Activated CD4-positive, alpha-beta T cell treated with anti-CD3 and anti-CD28 coated beads for 36 hours (primary cell): ENCODE measurements at regions of chr1 and their contacts with region 1.

Region 1: DNA sequence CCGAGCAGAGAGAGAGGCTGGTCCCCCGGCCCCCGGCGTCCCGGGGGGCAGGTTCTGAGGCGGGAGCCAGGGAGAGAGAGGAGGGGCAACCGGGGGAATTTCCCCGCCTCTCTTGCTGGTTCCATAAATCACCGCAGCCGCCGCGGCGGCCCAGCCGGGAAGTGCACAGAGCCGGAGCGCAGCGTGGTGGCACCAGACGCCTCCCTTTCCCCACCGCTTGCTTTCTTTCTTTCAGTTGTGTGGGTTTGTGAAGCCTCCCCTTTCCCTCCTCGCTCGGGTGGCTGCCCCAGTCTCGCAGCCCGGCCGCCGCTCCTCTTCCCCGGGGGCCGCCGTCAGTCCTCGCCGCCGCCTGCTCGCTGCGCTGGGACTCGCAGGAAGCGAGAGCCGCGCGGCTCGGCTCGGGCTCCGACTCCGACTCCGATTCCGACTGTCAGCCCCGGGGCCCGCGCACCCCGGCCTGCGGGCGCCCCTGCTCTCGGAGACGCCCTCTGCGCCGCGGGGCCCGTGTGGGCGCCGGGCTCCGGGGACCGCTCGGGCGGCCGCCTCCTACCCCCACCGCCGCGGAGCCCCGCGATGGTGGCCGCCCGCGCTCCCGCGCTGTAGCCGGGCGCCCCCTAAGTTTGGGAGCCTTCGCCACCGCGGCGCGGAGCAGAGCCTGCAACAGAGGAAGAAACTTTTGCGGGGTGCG is at the start of gene CACHD1:
- DNase-seq: peak; percentile 89
- ATAC-seq: peak; percentile 88
- H3K4me3 Mint-ChIP-seq: peak within 1 kb of the TSS; percentile 82
- H3K27ac Mint-ChIP-seq: peak within 1 kb of the TSS; percentile 77
- H3K4me1 Mint-ChIP-seq: peaks cover 16% of the 10 kb centered on the region
- H3K27me3 Mint-ChIP-seq: peaks cover 32% of the 10 kb centered on the region
- total RNA-seq, gene CACHD1: 1.9 to 2.3 TPM

Region 2: DNA sequence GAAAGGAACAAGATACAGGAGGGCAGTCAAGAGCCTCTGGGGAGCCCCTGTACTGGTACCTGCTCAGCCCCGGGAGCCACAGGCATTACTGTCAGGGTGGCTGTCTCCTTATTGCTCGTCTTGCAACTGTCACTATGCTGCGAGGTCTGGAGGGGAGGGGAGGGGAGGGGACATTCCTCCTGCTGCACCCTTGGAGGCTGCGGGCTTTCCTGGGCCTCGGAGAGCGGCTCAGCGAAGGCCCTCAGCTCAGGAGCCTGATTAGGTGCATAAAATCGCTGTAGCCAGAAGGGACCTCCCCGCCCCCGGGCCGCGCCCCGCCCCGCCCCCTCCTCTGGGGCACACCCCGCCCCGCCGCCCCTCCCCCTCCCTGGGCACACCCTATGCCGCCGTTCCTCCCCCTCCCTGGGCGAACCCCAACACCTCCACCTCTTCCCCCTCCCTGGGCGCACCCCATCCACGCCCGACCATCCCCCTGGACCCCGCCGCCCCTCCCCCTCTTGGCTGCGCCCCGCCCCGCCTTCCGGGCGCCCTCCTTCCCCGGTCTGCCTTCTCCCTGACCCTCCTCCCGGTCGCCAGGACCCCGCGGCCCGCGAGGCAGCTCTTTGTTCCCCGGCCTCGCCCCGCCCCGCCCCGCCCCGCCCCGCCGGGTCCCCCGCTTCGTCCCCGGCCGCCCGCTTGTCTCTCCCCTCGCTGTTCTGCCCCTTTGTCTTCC is 35.3 kb after region 1 on chr1:
- CTCF ChIA-PET with region 1: no interaction called
- POLR2A ChIA-PET with region 1: no interaction called
- intact Hi-C with region 1: loop called in 1 of 2 experiments (anchors 1 kb)
- DNase-seq: peak; percentile 83
- ATAC-seq: peak; percentile 68
- H3K4me3 Mint-ChIP-seq: peak overlapping the region; percentile 66
- H3K27ac Mint-ChIP-seq: peak overlapping the region; percentile 52
- H3K4me1 Mint-ChIP-seq: peaks cover 29% of the 10 kb centered on the region
- H3K27me3 Mint-ChIP-seq: peaks cover 13% of the 10 kb centered on the region

Region 3: DNA sequence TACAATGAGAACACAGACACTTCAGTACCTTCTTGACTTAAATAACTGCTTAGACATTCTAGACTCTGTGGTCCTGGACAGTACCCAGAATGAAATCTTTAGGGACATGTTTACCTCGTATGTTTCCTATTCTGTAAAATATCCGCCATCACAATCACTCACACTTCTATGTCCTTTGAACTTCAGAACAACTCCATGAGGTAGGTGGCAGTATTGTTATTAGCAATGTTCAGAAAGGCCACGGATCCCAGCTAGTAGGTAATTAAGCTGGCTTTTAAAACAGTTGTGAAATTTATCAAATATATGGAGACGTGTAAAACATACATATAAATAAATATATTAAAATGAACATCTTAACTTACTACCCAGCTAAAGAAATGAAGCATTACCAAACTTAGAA is 83.2 kb after region 1 on chr1:
- CTCF ChIA-PET with region 1: no interaction called
- POLR2A ChIA-PET with region 1: no interaction called
- intact Hi-C with region 1: loop called in 1 of 2 experiments (anchors 2 kb)
- DNase-seq: no peak
- ATAC-seq: peak; percentile 32
- H3K4me3 Mint-ChIP-seq: no peak overlapping the region
- H3K27ac Mint-ChIP-seq: no peak overlapping the region
- H3K4me1 Mint-ChIP-seq: peaks cover 39% of the 10 kb centered on the region
- H3K27me3 Mint-ChIP-seq: no peaks in the 10 kb centered on the region

Region 4: GRCh38 chr1:64663668-64664067 is 193.5 kb after region 1 on chr1:
- CTCF ChIA-PET with region 1: no interaction called
- POLR2A ChIA-PET with region 1: no interaction called
- intact Hi-C with region 1: no loop called
- DNase-seq: peak; percentile 56
- ATAC-seq: peak; percentile 61
- H3K4me3 Mint-ChIP-seq: no peak overlapping the region
- H3K27ac Mint-ChIP-seq: no peak overlapping the region
- H3K4me1 Mint-ChIP-seq: no peaks in the 10 kb centered on the region
- H3K27me3 Mint-ChIP-seq: peaks cover 2% of the 10 kb centered on the region

Region 5: GRCh38 chr1:64675718-64676345 is 205.7 kb after region 1 on chr1:
- CTCF ChIA-PET with region 1: no interaction called
- POLR2A ChIA-PET with region 1: no interaction called
- intact Hi-C with region 1: loop called in 1 of 2 experiments (anchors 5 kb)
- DNase-seq: no peak
- ATAC-seq: no peak
- H3K4me3 Mint-ChIP-seq: no peak overlapping the region
- H3K27ac Mint-ChIP-seq: no peak overlapping the region
- H3K4me1 Mint-ChIP-seq: no peaks in the 10 kb centered on the region
- H3K27me3 Mint-ChIP-seq: no peaks in the 10 kb centered on the region

Region 6: DNA sequence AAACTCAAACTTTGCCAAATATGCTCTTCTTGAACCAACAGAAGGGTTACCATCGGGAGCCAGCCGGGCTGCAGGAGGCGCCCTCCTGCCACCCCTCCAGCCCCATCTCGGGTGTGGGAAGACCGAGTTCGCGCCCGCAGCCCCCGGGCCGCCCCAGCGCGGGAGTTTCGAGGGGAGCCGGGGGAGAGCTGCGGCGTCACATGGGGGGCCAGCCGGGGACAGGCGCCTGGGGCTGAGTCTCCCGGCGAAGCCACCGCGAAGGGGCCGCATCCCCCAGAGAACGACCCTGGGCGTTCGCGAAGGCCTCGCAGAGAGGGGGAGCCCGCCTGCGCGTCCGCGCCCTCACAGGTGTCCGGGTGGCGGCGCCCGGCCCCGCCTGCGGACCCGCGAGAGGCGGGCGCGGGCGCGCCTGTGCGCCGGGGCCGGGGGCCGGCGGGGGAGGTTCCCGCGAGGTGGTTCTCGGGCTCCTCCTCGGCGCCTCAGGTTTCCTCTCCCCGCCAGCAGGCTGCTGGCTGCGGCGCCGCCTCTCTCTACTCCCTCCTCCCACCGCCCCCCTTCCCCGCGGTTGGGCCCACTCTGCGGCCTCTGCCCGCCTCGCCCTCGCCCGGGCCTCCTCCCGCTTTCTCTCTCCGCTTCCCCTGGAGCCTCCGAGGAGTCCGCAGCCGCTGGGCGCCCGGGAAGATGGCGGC is 274.5 kb after region 1 on chr1 and contains the start of gene RAVER2:
- CTCF ChIA-PET with region 1: no interaction called
- POLR2A ChIA-PET with region 1: no interaction called
- intact Hi-C with region 1: loop called in 1 of 2 experiments (anchors 1 kb)
- DNase-seq: peak; percentile 72
- ATAC-seq: peak; percentile 79
- H3K4me3 Mint-ChIP-seq: peak within 1 kb of the TSS; percentile 76
- H3K27ac Mint-ChIP-seq: peak within 1 kb of the TSS; percentile 70
- H3K4me1 Mint-ChIP-seq: peaks cover 17% of the 10 kb centered on the region
- H3K27me3 Mint-ChIP-seq: peaks cover 5% of the 10 kb centered on the region
- total RNA-seq, gene RAVER2: 3.2 to 3.6 TPM